ENCODE measurements at regions of chr5 and their contacts with region 1.

Region 1: DNA sequence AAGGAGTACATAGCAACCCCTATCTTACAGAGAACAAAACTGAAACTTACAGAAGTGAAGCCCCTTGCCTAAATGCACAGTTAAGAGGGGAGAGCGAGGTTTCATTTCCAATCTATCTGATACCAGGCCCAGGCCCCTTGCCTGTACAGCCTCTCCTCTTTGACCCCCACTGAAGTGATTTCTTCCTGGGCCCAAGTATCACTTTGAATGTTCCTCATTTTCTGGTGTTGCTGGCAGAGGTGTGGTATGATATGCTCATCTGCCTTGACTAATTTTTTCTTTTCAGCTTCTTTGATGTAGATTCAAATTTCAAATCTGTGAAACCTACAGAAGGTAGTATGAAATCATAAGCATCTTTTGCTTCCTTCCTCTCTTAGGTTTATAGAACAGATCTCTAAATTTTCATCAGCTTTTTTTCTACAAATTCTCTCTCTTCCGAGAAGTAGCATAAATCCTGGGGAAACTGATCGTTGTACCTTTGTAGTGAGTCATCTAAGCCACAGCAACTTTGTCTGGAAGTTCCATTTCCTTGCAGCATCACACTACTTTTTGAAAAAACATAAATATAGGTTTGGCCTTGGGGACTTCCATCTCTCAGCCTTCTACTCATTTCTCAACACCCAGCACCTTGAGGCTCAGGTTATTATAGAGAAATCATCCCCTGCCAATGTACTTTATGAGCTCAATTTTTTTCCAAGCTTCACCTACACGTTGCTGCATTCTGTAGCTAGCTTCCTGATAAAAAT is 402.4 kb upstream of the PTGER4 start:
- DNase-seq: peak; percentile 31
- H3K4me3 Mint-ChIP-seq: peak overlapping the region; percentile 17
- H3K27ac Mint-ChIP-seq: peak overlapping the region; percentile 93
- H3K4me1 Mint-ChIP-seq: peaks cover 70% of the 10 kb centered on the region
- H3K27me3 Mint-ChIP-seq: no peaks in the 10 kb centered on the region

Region 2: DNA sequence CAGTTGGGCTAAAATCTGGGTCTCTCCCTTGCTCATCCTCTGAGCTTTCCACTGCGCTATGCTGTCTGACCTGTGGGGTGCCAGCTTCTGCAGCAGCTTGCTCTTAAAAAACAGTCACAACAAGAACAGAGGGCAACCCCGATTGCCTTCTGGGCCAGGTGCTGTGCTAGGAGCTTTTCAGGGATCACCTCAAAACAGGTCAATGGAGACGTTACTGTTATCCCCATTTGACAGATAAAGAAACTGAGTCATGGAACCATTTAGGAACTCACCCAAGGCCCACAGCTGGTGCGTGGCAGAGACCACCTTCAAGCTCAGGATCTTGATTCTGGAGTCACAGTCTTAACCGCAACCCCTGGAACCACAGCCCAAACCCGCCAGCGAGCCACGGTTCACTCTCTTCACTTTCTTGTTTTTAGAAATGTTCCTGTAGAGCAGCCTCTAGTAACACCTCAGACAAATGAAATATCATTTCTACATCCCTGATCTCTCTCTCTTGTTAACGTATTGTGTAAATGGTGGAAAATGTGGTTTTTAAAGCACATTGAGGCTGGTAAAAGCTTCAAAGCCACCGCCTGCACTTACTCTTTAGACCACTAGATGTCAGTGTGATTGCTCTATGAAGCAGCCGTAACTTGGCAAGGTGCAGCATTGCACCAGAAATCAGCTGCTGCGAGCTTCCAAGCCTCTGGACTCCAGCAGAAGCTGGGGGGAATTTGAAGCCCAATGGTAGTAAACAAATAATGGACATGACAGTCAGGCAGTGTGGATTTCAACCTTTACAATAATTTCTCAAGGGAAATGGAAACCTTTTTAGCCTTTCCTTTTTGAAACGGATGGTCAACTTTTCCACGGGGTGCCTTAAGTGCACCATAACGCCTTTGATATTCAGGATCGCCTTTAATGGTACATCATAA is 1059.7 kb before region 1 on chr5:
- intact Hi-C with region 1: loop called (anchors 10 kb)
- DNase-seq: peak; percentile 70
- H3K4me3 Mint-ChIP-seq: peak overlapping the region; percentile 74
- H3K27ac Mint-ChIP-seq: peak overlapping the region; percentile 78
- H3K4me1 Mint-ChIP-seq: peaks cover 59% of the 10 kb centered on the region
- H3K27me3 Mint-ChIP-seq: no peaks in the 10 kb centered on the region

Region 3: DNA sequence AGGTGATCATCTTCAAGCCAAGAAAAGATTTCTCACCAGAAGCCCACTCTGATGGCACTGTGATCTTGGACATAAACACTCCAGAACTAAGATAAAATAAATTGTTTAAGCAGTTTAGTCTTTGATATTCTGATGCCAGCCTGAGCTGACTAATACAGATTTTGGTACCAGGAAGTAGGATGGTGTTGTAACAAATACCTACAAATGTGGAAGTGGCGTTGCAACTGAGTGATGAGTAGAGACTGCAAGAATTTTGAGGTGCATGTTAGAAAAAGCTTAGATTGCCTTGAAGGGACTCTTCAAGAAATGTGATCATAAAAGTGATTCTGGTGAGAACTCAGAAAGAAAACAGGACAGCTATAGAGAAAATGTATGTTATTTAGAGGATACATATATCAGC is 260.2 kb before region 1 on chr5:
- intact Hi-C with region 1: no loop called
- DNase-seq: no peak
- H3K4me3 Mint-ChIP-seq: no peak overlapping the region
- H3K27ac Mint-ChIP-seq: no peak overlapping the region
- H3K4me1 Mint-ChIP-seq: no peaks in the 10 kb centered on the region
- H3K27me3 Mint-ChIP-seq: peaks cover 5% of the 10 kb centered on the region

Region 4: GRCh38 chr5:40240111-40240510 is 37.2 kb before region 1 on chr5:
- intact Hi-C with region 1: loop called (anchors 5 kb)
- DNase-seq: no peak
- H3K4me3 Mint-ChIP-seq: no peak overlapping the region
- H3K27ac Mint-ChIP-seq: no peak overlapping the region
- H3K4me1 Mint-ChIP-seq: peaks cover 22% of the 10 kb centered on the region
- H3K27me3 Mint-ChIP-seq: no peaks in the 10 kb centered on the region

Region 5: GRCh38 chr5:40333459-40334244 is 56.3 kb after region 1 on chr5:
- intact Hi-C with region 1: loop called (anchors 1 kb)
- DNase-seq: no peak
- H3K4me3 Mint-ChIP-seq: no peak overlapping the region
- H3K27ac Mint-ChIP-seq: peak overlapping the region; percentile 27
- H3K4me1 Mint-ChIP-seq: peaks cover 43% of the 10 kb centered on the region
- H3K27me3 Mint-ChIP-seq: no peaks in the 10 kb centered on the region

Region 6: GRCh38 chr5:40410231-40410861 is 133.0 kb after region 1 on chr5:
- intact Hi-C with region 1: loop called (anchors 1 kb)
- DNase-seq: peak; percentile 76
- H3K4me3 Mint-ChIP-seq: peak overlapping the region; percentile 72
- H3K27ac Mint-ChIP-seq: peak overlapping the region; percentile 95
- H3K4me1 Mint-ChIP-seq: peaks cover 70% of the 10 kb centered on the region
- H3K27me3 Mint-ChIP-seq: no peaks in the 10 kb centered on the region

Region 7: GRCh38 chr5:40578501-40579451 is 301.4 kb after region 1 on chr5:
- intact Hi-C with region 1: loop called (anchors 1 kb)
- DNase-seq: peak; percentile 40
- H3K4me3 Mint-ChIP-seq: peak overlapping the region; percentile 68
- H3K27ac Mint-ChIP-seq: peak overlapping the region; percentile 92
- H3K4me1 Mint-ChIP-seq: peaks cover 42% of the 10 kb centered on the region
- H3K27me3 Mint-ChIP-seq: no peaks in the 10 kb centered on the region

Region 8: GRCh38 chr5:40798012-40798855 is 520.9 kb after region 1 on chr5 and contains the start of gene PRKAA1:
- intact Hi-C with region 1: loop called (anchors 1 kb)
- DNase-seq: peak; percentile 87
- H3K4me3 Mint-ChIP-seq: peak within 1 kb of the TSS; percentile 91
- H3K27ac Mint-ChIP-seq: peak within 1 kb of the TSS; percentile 96
- H3K4me1 Mint-ChIP-seq: peaks cover 41% of the 10 kb centered on the region
- H3K27me3 Mint-ChIP-seq: no peaks in the 10 kb centered on the region
- total RNA-seq, gene PRKAA1: 56.6 and 59.0 TPM in 2 replicates